ENCODE measurements at regions of chr18 and their contacts with region 1.

Region 1: DNA sequence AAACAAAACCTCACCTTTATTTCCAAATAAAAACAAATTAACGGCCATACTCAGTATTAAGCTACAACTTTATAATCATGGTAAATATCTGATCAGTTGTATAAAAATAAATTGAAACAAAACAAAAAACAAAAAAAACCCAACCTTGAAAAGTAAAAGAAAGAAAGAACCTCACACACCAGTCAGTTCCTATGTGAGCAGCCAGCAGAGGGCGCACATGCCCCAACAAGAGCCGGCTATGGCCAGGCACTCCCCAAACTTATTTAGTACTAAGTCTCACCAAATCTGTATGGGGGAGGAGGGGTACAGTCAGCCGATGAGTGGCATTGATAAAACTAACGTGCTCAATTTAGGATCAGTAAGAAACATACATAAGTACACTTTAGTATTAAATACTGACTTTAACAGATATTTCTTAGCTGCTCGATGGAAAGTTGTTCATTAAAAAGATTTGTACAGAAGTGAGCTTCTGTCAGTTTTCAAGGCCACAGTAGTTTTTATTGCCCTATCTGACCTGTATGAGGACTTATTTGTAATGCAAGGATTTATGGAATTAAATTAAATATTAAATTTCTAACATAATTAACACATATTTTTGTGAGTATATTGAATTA is 172.6 kb downstream of the TCF4 start:
- DNase-seq: peak; percentile 65 to 90
- ATAC-seq: peak; percentile 56

Region 2: DNA sequence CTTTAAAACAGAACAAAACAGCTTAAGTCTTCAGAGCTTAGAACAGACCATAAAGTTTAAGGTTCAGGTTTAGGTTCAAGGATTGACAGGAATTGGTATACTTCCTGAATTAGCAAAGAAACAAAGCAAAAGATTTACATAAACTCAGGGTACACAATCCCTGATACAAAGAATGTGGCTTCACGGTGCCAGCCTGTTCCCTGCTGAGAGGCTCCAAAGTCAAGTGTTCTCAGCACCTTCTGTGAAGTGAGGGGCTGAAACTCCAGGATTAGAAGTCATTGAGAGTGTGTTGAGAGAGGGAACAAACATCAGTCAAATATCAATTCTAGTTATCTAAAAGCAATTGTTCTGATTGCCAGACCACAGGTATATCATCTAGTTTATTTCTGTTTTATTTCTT is 788.6 kb before region 1 on chr18:
- intact Hi-C with region 1: no loop called
- DNase-seq: no peak
- ATAC-seq: no peak

Region 3: DNA sequence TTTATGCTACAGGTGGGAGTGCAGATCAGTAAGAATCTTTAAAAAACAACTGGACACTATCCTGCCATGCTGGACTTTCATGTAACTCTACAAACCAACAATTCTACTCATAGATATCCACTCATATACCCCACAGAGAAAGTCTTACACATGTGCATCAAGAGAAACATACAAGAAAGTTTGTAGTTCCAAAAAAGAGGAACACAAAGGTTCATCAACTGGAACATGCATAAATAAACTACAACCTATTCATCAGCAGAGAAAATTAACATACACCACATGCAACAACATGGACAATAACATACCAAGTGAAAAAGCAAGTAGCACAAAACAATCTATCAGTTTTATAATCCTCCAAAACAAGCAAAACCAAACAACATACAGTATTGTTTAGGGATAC is 155.6 kb after region 1 on chr18:
- intact Hi-C with region 1: no loop called
- DNase-seq: no peak
- ATAC-seq: no peak

Region 4: GRCh38 chr18:55582325-55582724 is 167.0 kb after region 1 on chr18:
- intact Hi-C with region 1: loop called in 1 of 2 experiments (anchors 5 kb)
- DNase-seq: no peak
- ATAC-seq: no peak

Region 5: DNA sequence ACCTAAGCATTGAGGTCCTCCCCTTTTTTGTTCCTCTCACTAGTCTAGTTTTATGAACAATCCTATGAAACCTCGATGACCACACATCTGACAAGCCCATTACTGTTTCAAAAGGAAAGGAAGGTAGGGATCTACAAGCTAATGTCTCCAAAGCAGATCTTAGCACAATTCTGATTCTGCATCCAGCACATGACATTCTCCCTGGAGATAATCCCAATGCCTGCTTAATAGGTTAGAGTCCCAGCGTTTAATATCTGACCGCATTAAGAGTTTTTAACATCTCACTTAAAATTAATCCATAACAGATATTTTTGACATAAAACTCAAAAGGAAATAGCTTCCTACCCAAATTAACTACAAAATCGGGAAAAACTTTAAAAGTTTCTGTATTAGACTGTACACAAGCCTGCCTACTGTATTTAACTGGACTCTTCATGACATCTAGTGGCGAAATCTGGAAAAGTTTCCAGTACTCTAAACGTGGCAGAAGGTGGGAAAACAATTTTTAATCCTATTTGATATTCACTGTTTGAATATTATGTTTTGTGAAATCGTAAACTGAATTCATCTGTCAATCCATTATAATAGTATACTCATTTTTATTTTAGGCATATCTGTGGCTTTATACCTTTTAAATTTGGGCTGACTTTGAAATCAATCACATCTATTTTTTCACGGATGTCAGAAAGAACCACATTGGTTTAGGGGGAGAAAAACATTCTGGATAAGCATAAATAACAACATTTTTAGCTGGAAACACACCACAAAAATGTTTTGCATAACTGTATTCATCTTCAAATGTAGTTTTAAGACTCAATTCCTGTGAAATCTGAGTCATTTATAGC is 1160.7 kb after region 1 on chr18:
- intact Hi-C with region 1: loop called in 1 of 2 experiments (anchors 10 kb)
- DNase-seq: no peak
- ATAC-seq: peak; percentile 64

Measured in left colon (tissue), 2 donors.